ENCODE measurements at regions of chr9 and their contacts with region 1.

Region 1: DNA sequence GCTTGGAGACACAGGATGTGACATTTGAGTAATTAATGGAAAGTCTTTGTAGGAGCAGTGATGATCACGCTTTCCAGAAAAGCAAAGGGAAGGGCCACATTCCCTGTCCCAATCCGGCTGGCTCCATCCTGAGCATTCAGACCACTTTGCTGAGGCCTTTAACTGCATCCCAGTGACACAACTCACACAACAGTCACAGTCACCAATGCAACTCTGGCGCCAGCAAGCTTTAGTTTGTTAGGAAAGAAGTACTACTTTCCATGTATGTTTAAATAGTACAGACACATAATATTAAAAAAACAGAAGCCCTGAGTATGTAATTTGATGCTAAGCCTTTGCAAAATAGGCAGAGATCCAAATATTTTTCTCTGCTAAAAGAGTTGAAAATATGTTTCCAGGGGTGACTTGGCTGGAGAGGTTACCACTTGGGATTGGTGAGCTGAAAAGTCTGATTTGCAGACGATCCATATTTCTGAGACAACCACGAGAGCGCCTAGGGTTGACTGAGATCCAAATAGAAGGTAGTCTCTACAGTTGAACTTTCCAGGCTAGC is 31.7 kb upstream of the GAS1 start:
- DNase-seq: no peak
- H3K4me3 ChIP-seq: no peak overlapping the region
- H3K27ac ChIP-seq: no peak overlapping the region
- H3K4me1 ChIP-seq: no peaks in the 10 kb centered on the region
- H3K27me3 ChIP-seq: no peaks in the 10 kb centered on the region
- CTCF ChIP-seq: no peak

Region 2: GRCh38 chr9:86795823-86796553 is 183.0 kb before region 1 on chr9:
- intact Hi-C with region 1: loop called (anchors 5 kb)
- DNase-seq: no peak
- H3K4me3 ChIP-seq: no peak overlapping the region
- H3K27ac ChIP-seq: no peak overlapping the region
- H3K4me1 ChIP-seq: no peaks in the 10 kb centered on the region
- H3K27me3 ChIP-seq: no peaks in the 10 kb centered on the region
- CTCF ChIP-seq: no peak

Region 3: DNA sequence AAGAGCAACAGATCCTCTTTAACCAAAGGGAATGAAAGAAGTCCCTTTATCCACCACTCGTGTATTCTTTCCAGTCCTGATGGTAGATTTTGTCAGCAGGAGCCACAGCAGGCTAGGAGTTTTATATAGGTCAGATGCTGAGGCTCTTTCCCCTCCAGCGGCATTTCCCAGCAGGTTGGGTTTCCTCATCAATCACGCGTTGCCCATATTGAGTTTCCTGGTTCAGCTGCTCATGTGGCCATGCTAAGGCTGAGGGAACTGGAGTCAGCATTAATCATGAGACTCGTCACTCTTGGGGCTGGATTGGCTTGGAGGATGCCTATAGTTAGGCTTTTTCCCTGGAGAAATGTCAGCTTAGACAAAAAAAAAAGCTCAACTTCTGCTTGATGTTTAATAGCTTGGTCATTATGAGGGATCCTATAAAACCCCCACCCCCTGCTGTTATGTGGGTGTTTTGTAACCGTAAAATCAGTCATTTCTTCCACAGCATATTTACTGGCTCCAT is 161.7 kb after region 1 on chr9:
- intact Hi-C with region 1: no loop called
- DNase-seq: no peak
- H3K4me3 ChIP-seq: no peak overlapping the region
- H3K27ac ChIP-seq: no peak overlapping the region
- H3K4me1 ChIP-seq: no peaks in the 10 kb centered on the region
- H3K27me3 ChIP-seq: no peaks in the 10 kb centered on the region
- CTCF ChIP-seq: no peak